Head of caudate nucleus (tissue), 42 donors: ENCODE measurements at regions of chr19 and their contacts with region 1.

Region 1: GRCh38 chr19:8396563-8397203 is 6.5 kb downstream of the RAB11B start:
- DNase-seq: peak; percentile 56 to 89 (median 80)

Region 2: DNA sequence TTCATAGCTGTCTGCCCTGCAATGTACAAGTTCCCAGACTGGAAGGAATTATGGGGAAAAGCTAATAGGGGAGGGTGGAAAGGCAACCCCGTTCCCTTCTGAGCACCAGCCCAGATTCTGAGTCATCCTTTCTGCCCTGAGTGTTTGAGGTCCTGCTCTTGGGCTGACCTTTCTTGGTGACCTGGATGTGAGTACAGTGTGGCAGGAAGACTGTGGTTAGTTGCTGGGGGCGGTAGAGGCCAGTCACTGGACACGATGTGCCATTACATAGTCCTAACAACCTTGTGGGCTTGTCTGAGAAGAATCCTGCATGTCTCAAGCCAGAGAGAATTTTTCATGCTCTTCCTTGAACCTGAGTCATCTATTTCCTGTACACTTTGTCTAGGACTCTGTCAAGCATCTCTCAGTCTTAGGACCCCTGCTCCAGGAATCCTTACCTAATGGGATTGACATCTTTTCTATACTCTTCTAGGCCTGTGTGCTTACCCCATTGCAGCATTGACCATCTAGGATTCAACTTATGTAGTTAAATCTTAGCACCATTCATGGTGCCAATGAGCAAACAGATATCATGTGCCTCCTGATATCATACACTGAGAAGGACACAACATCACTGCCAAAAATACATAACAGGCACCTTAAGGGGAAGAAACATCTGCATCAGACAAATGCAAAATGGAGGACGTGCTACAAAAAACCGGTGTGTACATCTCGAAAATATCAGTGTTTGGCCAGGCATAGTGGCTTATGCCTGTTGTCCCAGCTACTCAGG is 40.9 kb before region 1 on chr19:
- intact Hi-C with region 1: loop called (anchors 5 kb)
- DNase-seq: no peak